MCF 10A (cell line): ENCODE measurements at regions of chr15 and their contacts with region 1.

Region 1: DNA sequence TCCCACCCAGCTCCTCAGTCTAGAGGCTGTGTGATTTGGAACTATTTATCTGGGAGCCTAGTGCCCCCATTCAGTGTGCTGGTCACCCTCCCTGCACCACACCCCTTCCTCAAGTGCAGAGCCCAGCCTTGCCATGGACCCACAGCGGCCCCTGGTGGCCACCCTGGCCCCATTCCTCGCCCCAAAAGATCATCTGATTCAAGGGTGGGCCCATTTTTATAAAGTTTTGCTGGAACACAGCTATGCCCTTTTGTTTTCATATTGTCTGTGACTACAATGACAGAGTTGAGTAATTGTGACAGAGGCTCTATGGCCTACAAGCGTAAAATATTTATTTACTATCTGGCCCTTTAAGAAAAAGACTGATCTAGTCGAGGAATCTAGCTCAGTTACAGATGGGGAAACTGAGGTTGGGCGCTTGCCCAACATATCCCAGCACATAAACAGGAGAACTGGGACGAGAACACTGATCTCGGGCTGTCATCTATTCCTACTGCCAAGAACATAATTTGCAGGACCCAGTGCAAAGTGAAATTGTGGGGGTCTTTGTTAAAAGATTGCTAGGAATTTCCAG is 1.8 kb downstream of the FES start:
- DNase-seq: peak; percentile 55
- H3K4me3 Mint-ChIP-seq: no peak overlapping the region
- H3K27ac Mint-ChIP-seq: no peak overlapping the region
- H3K4me1 Mint-ChIP-seq: no peaks in the 10 kb centered on the region
- H3K27me3 Mint-ChIP-seq: no peaks in the 10 kb centered on the region
- CTCF ChIP-seq: peak; percentile 98

Region 2: GRCh38 chr15:90642464-90643300 is 243.4 kb before region 1 on chr15:
- CTCF ChIA-PET with region 1: interaction called, 36 read pairs
- POLR2A ChIA-PET with region 1: interaction called, 5 read pairs
- intact Hi-C with region 1: no loop called
- DNase-seq: no peak
- H3K4me3 Mint-ChIP-seq: no peak overlapping the region
- H3K27ac Mint-ChIP-seq: no peak overlapping the region
- H3K4me1 Mint-ChIP-seq: no peaks in the 10 kb centered on the region
- H3K27me3 Mint-ChIP-seq: no peaks in the 10 kb centered on the region
- CTCF ChIP-seq: no peak

Region 3: DNA sequence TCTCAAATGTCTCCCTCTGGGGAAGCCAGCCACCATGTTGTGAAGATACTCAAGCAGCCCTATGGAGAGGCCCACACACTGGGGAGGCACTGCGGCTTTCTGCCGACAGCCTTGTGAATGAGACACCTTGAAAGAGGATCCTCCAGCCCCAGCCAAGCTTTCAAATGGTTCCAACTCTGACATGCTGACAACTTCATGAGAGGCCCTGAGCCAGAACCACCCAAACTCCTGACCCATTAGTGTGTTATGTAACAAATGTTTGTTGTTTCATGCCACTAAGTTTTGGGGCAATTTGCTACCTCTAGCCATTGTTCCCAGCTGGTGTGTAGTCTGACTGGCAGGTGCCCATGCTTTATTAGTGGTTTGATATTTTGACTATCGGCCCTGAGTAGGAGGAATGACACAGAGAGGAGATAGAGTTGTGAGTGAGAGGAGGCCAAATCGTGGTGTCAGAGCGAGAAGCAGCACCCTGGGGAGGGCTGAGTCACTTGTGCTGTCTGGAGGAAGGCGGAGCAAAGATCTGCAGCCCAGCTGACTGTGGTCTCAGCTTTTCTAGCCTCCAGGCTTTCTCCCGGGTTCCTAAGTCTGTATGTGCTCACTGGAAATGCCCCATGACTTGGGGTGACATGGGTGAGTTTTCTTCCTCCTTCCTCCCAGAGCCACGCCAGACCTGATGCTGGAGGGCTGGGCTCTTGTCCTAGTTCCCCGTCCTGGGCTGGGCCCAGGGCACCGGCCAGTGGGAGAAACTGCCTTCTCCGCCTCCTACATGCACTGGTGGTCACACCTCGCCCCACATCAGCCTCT is 225.7 kb before region 1 on chr15:
- CTCF ChIA-PET with region 1: interaction called, 13 read pairs
- POLR2A ChIA-PET with region 1: no interaction called
- intact Hi-C with region 1: no loop called
- DNase-seq: peak; percentile 89
- H3K4me3 Mint-ChIP-seq: peak overlapping the region; percentile 68
- H3K27ac Mint-ChIP-seq: peak overlapping the region; percentile 86
- H3K4me1 Mint-ChIP-seq: peaks cover 34% of the 10 kb centered on the region
- H3K27me3 Mint-ChIP-seq: no peaks in the 10 kb centered on the region
- CTCF ChIP-seq: no peak

Region 4: DNA sequence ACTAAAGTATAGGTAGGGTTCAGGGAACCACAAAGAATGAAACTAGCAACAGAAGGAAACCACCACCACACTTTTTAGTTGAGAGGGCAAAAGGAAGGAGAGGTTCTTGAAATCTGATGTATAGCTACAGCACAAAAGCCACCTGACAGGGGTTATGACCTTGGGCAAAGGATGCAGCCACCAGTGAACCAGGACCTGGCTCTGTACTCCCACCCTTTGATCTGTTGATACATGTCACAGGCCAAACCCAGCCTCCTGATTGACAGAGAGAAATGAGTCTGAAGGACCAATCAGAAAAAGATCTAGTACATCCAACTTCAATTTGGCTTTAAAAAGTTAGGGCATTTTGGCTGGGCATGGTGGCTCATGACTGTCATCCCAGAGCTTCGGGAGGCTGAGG is 188.9 kb before region 1 on chr15:
- CTCF ChIA-PET with region 1: interaction called, 16 read pairs
- POLR2A ChIA-PET with region 1: no interaction called
- intact Hi-C with region 1: loop called (anchors 1 kb)
- DNase-seq: no peak
- H3K4me3 Mint-ChIP-seq: no peak overlapping the region
- H3K27ac Mint-ChIP-seq: no peak overlapping the region
- H3K4me1 Mint-ChIP-seq: no peaks in the 10 kb centered on the region
- H3K27me3 Mint-ChIP-seq: peaks cover 10% of the 10 kb centered on the region
- CTCF ChIP-seq: no peak

Region 5: GRCh38 chr15:90769375-90769774 is 116.8 kb before region 1 on chr15:
- CTCF ChIA-PET with region 1: interaction called, 11 read pairs
- POLR2A ChIA-PET with region 1: no interaction called
- intact Hi-C with region 1: no loop called
- DNase-seq: no peak
- H3K4me3 Mint-ChIP-seq: no peak overlapping the region
- H3K27ac Mint-ChIP-seq: no peak overlapping the region
- H3K4me1 Mint-ChIP-seq: no peaks in the 10 kb centered on the region
- H3K27me3 Mint-ChIP-seq: no peaks in the 10 kb centered on the region
- CTCF ChIP-seq: no peak

Region 6: GRCh38 chr15:91018158-91018557 is 132.0 kb after region 1 on chr15:
- CTCF ChIA-PET with region 1: no interaction called
- POLR2A ChIA-PET with region 1: no interaction called
- intact Hi-C with region 1: no loop called
- DNase-seq: no peak
- H3K4me3 Mint-ChIP-seq: no peak overlapping the region
- H3K27ac Mint-ChIP-seq: no peak overlapping the region
- H3K4me1 Mint-ChIP-seq: peaks cover 18% of the 10 kb centered on the region
- H3K27me3 Mint-ChIP-seq: no peaks in the 10 kb centered on the region
- CTCF ChIP-seq: no peak

Region 7: GRCh38 chr15:91142114-91142731 is 256.1 kb after region 1 on chr15:
- CTCF ChIA-PET with region 1: no interaction called
- POLR2A ChIA-PET with region 1: no interaction called
- intact Hi-C with region 1: no loop called
- DNase-seq: peak; percentile 26
- H3K4me3 Mint-ChIP-seq: no peak overlapping the region
- H3K27ac Mint-ChIP-seq: no peak overlapping the region
- H3K4me1 Mint-ChIP-seq: no peaks in the 10 kb centered on the region
- H3K27me3 Mint-ChIP-seq: peaks cover 32% of the 10 kb centered on the region
- CTCF ChIP-seq: peak; percentile 38